B cell (primary cell): ENCODE measurements at regions of chr1 and their contacts with region 1.

Region 1: DNA sequence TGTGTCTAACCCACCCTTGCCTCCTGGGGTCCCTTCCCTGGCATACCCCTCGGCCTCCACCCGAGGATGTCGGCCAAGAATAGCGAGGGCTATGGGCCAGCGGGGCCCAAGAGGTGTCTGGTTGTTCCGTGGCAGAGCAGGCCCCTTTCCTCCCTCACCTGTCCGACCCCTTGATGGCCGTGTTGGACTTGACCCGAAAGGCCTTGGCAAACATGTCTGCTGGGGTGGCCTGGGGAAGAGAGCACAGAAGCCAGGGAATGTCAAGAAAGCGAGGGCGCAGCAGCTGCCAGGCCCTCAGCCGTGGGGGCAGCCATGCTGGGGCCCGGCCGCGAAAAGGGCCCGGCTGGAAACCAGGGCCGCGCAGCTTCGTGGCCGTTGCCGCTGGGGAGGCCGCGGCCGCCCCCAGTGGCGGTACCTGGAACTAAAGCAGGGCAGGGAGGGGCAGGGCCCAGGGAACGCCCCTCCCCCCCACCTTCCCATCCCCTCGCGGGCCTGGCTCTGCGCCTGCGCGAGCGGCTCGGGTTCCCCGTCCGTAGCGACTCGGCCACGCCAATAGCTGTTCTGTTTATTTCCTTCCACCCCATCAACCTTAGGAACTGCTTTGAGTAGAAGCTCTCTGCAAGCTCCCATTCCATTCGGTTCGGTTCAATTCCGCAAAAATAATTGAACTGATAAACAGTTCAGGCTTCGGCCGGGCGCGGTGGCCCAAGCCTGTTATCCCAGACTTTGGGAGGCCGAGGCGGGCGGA is at the start of gene EIF2D:
- DNase-seq: peak; percentile 96
- ATAC-seq: peak; percentile 100
- H3K4me3 ChIP-seq: peak within 1 kb of the TSS; percentile 61 to 87 (median 86)
- H3K4me3 Mint-ChIP-seq: peak within 1 kb of the TSS; percentile 93
- H3K27ac ChIP-seq: peak within 1 kb of the TSS; percentile 70 to 93
- H3K27ac Mint-ChIP-seq: peak within 1 kb of the TSS; percentile 96
- H3K4me1 ChIP-seq: peaks cover 8 to 12% of the 10 kb centered on the region in 2 donors
- H3K4me1 Mint-ChIP-seq: peaks cover 19% of the 10 kb centered on the region
- H3K27me3 ChIP-seq: no peaks in the 10 kb centered on the region
- H3K27me3 Mint-ChIP-seq: no peaks in the 10 kb centered on the region
- CTCF ChIP-seq: peak; percentile 88
- total RNA-seq, gene EIF2D: 60.6 and 62.2 TPM in 2 replicates

Region 2: GRCh38 chr1:206706298-206706791 is 94.0 kb after region 1 on chr1:
- CTCF ChIA-PET with region 1: no interaction called
- POLR2A ChIA-PET with region 1: interaction called, 10 read pairs
- intact Hi-C with region 1: no loop called
- DNase-seq: no peak
- ATAC-seq: no peak
- H3K4me3 ChIP-seq: no peak overlapping the region
- H3K4me3 Mint-ChIP-seq: peak overlapping the region; percentile 29
- H3K27ac ChIP-seq: no peak overlapping the region
- H3K27ac Mint-ChIP-seq: peak overlapping the region; percentile 57
- H3K4me1 ChIP-seq: peaks cover 79 to 80% of the 10 kb centered on the region in 2 donors
- H3K4me1 Mint-ChIP-seq: peaks cover 90% of the 10 kb centered on the region
- H3K27me3 ChIP-seq: no peaks in the 10 kb centered on the region
- H3K27me3 Mint-ChIP-seq: no peaks in the 10 kb centered on the region
- CTCF ChIP-seq: no peak